Naive thymus-derived CD4-positive, alpha-beta T cell (primary cell): ENCODE measurements at regions of chr2 and their contacts with region 1.

Region 1: DNA sequence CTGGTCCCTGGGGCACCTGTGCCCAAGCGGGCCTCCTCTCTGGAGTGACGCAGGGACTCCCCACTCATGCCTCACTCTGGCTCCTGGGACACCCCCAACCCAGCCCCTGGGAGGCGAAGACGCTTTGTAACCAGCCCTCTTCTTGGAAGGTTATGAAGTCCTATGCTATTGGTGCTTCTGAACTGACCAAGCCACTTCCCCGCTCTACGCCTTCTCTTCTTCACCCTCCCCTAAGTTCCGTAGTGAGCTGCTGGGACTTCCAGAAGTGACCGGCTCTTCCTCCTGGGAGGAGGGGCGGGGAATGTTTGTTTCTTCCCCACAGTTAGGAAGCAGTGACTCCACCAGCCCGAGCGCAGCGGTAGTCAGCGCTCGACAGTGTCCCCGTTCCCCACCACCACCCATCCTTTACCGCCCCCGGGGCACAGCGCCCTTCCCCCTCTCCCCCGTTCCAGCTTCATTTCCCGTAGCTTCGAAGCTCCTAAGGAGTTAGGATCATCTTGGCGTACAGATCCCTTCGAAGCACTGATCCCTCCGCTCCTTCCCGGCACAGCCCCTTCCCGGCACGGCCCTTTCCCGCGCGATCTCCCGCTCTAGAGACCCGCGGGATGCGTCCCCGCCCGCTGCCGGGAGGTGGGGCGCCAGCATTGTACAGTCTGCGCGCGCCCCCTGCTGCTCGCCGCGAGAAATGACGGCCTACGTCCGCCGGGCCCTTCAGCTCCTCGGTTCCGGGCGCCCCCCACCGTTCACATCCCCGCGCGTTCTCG is 25.3 kb upstream of the NOTO start:
- DNase-seq: peak; percentile 74 to 92 (median 88)
- ATAC-seq: peak; percentile 96
- H3K4me3 ChIP-seq: peak overlapping the region; percentile 67
- H3K4me3 Mint-ChIP-seq: peak overlapping the region; percentile 83 to 92 (median 90)
- H3K27ac ChIP-seq: no peak overlapping the region
- H3K27ac Mint-ChIP-seq: peak overlapping the region in 5 of 9 donors; percentile 28 to 88 (median 51)
- H3K4me1 ChIP-seq: peaks cover 15 to 20% of the 10 kb centered on the region in 2 donors
- H3K4me1 Mint-ChIP-seq: peaks cover 9 to 17% (median 12%) of the 10 kb centered on the region in 7 donors
- H3K27me3 ChIP-seq: peaks cover 0 to 3% of the 10 kb centered on the region in 2 donors
- H3K27me3 Mint-ChIP-seq: peaks cover 22 to 72% (median 29%) of the 10 kb centered on the region in 5 donors

Region 2: GRCh38 chr2:71721362-71721665 is 1455.7 kb before region 1 on chr2:
- CTCF ChIA-PET with region 1: no interaction called
- POLR2A ChIA-PET with region 1: no interaction called
- intact Hi-C with region 1: no loop called
- DNase-seq: no peak
- ATAC-seq: no peak
- H3K4me3 ChIP-seq: no peak overlapping the region
- H3K4me3 Mint-ChIP-seq: no peak overlapping the region
- H3K27ac ChIP-seq: no peak overlapping the region
- H3K27ac Mint-ChIP-seq: no peak overlapping the region
- H3K4me1 ChIP-seq: no peaks in the 10 kb centered on the region
- H3K4me1 Mint-ChIP-seq: no peaks in the 10 kb centered on the region
- H3K27me3 ChIP-seq: no peaks in the 10 kb centered on the region
- H3K27me3 Mint-ChIP-seq: peaks cover 0 to 21% (median 0%) of the 10 kb centered on the region in 5 donors

Region 3: DNA sequence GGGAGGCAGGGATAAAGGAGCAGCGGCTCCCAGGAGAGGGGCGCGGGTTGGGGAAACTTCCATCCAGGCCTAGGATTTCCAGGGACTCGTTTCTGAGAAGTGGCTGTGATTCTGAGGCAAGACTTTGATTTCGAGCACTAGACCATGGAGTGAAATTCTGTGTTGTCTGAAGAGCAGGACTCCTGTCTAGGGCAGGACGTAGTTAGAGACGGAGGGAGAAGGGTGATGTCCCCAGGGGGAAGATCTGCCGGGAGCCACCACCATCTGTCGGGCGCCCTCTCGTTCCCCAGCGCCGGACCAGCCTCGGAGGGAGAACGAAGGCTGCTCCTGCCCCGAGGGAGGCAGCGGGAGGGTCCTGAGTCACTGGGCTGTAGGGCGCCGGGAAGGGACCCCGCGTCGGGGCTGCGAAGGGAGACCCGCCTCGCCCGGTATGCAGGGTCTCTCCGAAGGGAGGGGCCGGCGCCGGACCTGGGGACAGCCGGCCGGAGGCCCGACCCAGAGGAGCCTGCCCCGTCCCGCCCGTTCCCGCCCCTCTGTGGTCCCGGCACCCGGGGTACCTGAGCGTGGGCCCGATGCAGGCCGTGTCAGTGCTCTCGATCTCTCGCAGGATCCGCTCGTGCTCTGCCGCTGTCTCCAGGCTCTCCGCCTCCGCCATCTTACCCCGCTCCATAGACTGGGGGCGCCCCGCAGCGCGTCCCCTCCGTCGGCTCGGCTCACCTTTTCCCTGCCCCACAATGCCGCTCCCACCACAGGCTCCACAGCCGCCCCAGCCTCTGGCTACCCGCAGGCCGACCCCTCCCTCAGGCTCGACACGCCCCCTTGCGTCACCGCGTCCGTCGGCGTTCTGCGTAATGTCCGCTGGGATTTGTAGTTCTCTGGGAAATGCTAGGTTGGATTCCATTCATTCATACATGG is 351.6 kb before region 1 on chr2 and contains the start of gene EXOC6B:
- CTCF ChIA-PET with region 1: no interaction called
- POLR2A ChIA-PET with region 1: no interaction called
- intact Hi-C with region 1: loop called in 1 of 2 experiments (anchors 1 kb)
- DNase-seq: peak; percentile 78 to 87 (median 84)
- ATAC-seq: peak; percentile 96
- H3K4me3 ChIP-seq: peak within 1 kb of the TSS; percentile 70
- H3K4me3 Mint-ChIP-seq: peak within 1 kb of the TSS; percentile 88 to 99 (median 98)
- H3K27ac ChIP-seq: peak within 1 kb of the TSS; percentile 69
- H3K27ac Mint-ChIP-seq: peak within 1 kb of the TSS; percentile 70 to 96 (median 92)
- H3K4me1 ChIP-seq: peaks cover 14 to 19% of the 10 kb centered on the region in 2 donors
- H3K4me1 Mint-ChIP-seq: peaks cover 24 to 48% (median 45%) of the 10 kb centered on the region in 7 donors
- H3K27me3 ChIP-seq: no peaks in the 10 kb centered on the region
- H3K27me3 Mint-ChIP-seq: peaks cover 0 to 12% (median 5%) of the 10 kb centered on the region in 5 donors
- total RNA-seq, gene EXOC6B: 14.3 to 21.9 (median 18.0) TPM

Region 4: DNA sequence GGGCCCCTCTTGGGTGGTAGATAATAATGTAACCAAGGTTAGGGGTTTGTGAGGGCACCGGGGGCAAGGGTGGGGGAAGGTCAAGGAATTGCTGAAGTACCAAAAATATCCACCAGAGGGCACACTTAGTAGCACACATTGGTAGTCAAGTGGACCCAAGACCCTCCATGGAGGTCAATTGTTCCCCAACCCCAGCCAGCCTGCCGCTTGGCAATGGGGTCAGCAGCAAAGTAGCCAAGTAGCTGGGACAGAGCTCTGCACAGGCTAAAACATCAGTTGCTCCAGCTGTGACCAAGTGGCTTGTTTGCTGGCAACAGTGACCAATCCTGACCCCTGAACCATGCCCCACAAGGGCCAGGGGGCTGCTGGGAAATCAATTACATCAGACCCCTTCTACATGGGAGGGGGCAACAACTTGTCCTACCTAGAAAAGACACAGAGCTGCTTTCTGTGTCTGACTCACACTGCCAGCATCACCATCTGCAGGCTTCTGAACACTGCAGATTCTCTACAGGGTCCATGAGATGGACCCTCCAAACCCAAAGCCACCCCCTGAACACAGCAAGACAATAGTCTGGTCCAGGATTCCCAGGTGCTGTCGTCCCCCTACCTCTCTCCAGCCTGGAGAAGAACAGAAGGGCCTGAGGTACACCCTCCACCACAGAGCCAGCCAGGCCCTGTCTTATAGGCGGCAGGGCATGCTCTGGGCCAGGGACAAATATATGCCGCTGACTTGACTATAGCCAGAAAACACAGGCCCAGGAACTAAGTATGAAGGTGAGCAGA is 183.7 kb before region 1 on chr2:
- CTCF ChIA-PET with region 1: interaction called, 30 read pairs
- POLR2A ChIA-PET with region 1: no interaction called
- intact Hi-C with region 1: loop called (anchors 1 to 2 kb)
- DNase-seq: peak; percentile 14 to 68 (median 42)
- ATAC-seq: peak; percentile 71
- H3K4me3 ChIP-seq: no peak overlapping the region
- H3K4me3 Mint-ChIP-seq: no peak overlapping the region
- H3K27ac ChIP-seq: no peak overlapping the region
- H3K27ac Mint-ChIP-seq: no peak overlapping the region
- H3K4me1 ChIP-seq: no peaks in the 10 kb centered on the region
- H3K4me1 Mint-ChIP-seq: peaks cover 0 to 9% (median 0%) of the 10 kb centered on the region in 7 donors
- H3K27me3 ChIP-seq: no peaks in the 10 kb centered on the region
- H3K27me3 Mint-ChIP-seq: no peaks in the 10 kb centered on the region

Region 5: DNA sequence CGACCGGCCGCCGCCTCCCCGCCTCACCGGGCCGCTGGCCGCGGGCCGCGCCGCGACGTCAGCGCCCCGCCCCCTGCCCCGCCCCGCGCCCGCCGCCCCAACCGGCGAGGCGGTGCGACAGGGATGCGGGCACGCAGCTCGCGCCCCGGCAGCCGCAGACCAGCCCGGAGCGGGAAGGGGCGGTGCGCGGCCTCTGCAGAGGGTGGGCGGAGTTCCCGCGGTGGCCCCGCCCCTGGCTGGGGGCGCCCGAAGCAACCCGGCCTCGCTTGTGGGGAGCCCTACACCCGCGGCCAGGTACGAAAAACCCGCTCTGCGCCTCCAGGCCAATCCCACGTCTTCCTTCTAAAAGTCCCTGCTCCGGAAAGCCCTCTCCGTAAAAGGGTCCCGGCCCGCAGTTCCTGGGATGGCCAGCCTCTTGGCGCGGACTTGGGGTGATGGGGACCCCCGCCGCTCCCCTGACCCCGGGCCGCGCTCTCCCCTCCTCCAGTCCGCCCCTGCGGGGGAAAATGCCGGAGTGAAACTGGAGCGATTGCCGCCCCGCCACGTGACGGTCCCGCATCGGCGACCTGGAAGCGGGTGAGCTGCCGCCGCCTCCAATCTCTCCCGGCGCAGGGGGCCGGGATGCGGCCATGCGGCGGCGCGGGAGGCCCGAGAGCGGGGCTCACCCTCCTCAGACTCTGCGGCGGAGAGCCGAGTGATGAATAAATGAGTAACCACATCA is 64.0 kb before region 1 on chr2 and contains the start of gene RAB11FIP5:
- CTCF ChIA-PET with region 1: interaction called, 7 read pairs
- POLR2A ChIA-PET with region 1: interaction called, 7 read pairs
- intact Hi-C with region 1: loop called (anchors 1 to 2 kb)
- DNase-seq: peak; percentile 70 to 88 (median 76)
- ATAC-seq: peak; percentile 94
- H3K4me3 ChIP-seq: peak within 1 kb of the TSS; percentile 68
- H3K4me3 Mint-ChIP-seq: peak within 1 kb of the TSS; percentile 80 to 92 (median 88)
- H3K27ac ChIP-seq: peak within 1 kb of the TSS; percentile 61
- H3K27ac Mint-ChIP-seq: peak within 1 kb of the TSS in 8 of 9 donors; percentile 41 to 81 (median 74)
- H3K4me1 ChIP-seq: peaks cover 4 to 13% of the 10 kb centered on the region in 2 donors
- H3K4me1 Mint-ChIP-seq: peaks cover 9 to 33% (median 28%) of the 10 kb centered on the region in 7 donors
- H3K27me3 ChIP-seq: no peaks in the 10 kb centered on the region
- H3K27me3 Mint-ChIP-seq: peaks cover 0 to 14% (median 0%) of the 10 kb centered on the region in 5 donors
- total RNA-seq, gene RAB11FIP5: 8.6 to 13.2 (median 11.2) TPM

Region 6: GRCh38 chr2:73212448-73213176 is 35.5 kb after region 1 on chr2:
- CTCF ChIA-PET with region 1: interaction called, 25 read pairs
- POLR2A ChIA-PET with region 1: interaction called, 5 read pairs
- intact Hi-C with region 1: loop called (anchors 1 kb)
- DNase-seq: peak; percentile 48 to 71 (median 64)
- ATAC-seq: peak; percentile 76
- H3K4me3 ChIP-seq: no peak overlapping the region
- H3K4me3 Mint-ChIP-seq: peak overlapping the region in 8 of 10 donors; percentile 15 to 97 (median 62)
- H3K27ac ChIP-seq: no peak overlapping the region
- H3K27ac Mint-ChIP-seq: peak overlapping the region in 6 of 9 donors; percentile 40 to 98 (median 91)
- H3K4me1 ChIP-seq: peaks cover 14 to 18% of the 10 kb centered on the region in 2 donors
- H3K4me1 Mint-ChIP-seq: peaks cover 16 to 44% (median 36%) of the 10 kb centered on the region in 7 donors
- H3K27me3 ChIP-seq: no peaks in the 10 kb centered on the region
- H3K27me3 Mint-ChIP-seq: peaks cover 4 to 8% (median 7%) of the 10 kb centered on the region in 5 donors